Endothelial cell of umbilical vein (primary cell): ENCODE measurements at regions of chr13 and their contacts with region 1.

Region 1: DNA sequence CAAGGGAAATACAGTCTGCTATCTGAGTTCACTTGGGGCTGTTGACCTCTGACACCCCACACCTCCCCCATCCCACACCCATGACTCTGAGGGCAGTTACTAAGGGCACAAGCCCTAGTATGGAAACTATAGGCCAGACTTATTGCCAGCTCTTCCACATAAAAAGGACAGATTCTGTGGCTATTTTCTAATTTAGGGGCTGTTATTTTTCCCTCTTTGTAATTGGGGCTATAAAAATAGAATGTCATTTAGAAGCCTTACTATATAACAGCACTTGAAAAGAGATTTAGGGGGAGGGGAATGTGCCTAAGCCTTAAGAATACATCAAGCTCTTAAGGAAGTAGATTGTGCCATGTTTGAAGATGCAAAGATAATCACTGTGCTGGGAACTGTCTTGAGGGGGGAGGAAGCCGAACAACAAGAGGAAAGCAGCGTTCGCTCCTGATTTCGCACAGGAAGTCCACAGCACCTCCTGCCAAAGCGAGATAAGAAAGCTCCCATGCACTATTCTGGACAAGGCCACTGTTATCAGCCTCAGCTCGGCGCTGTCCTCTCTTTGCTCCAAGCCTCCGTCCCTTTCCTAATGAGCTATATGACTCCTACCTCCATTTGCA is 86.6 kb downstream of the FLT1 start:
- DNase-seq: peak; percentile 100
- H3K4me3 ChIP-seq: peak overlapping the region in 1 of 3 experiments; percentile 10
- H3K27ac ChIP-seq: peak overlapping the region; percentile 97
- H3K4me1 ChIP-seq: peaks cover 53% of the 10 kb centered on the region
- H3K27me3 ChIP-seq: no peaks in the 10 kb centered on the region
- CTCF ChIP-seq: no peak
- POLR2A ChIP-seq: peak; percentile 86

Region 2: GRCh38 chr13:28199089-28199488 is 209.3 kb before region 1 on chr13:
- CTCF ChIA-PET with region 1: no interaction called
- POLR2A ChIA-PET with region 1: no interaction called
- dilution Hi-C with region 1: no loop called
- intact Hi-C with region 1: no loop called
- DNase-seq: no peak
- H3K4me3 ChIP-seq: no peak overlapping the region
- H3K27ac ChIP-seq: no peak overlapping the region
- H3K4me1 ChIP-seq: no peaks in the 10 kb centered on the region
- H3K27me3 ChIP-seq: no peaks in the 10 kb centered on the region
- CTCF ChIP-seq: no peak
- POLR2A ChIP-seq: no peak

Region 3: DNA sequence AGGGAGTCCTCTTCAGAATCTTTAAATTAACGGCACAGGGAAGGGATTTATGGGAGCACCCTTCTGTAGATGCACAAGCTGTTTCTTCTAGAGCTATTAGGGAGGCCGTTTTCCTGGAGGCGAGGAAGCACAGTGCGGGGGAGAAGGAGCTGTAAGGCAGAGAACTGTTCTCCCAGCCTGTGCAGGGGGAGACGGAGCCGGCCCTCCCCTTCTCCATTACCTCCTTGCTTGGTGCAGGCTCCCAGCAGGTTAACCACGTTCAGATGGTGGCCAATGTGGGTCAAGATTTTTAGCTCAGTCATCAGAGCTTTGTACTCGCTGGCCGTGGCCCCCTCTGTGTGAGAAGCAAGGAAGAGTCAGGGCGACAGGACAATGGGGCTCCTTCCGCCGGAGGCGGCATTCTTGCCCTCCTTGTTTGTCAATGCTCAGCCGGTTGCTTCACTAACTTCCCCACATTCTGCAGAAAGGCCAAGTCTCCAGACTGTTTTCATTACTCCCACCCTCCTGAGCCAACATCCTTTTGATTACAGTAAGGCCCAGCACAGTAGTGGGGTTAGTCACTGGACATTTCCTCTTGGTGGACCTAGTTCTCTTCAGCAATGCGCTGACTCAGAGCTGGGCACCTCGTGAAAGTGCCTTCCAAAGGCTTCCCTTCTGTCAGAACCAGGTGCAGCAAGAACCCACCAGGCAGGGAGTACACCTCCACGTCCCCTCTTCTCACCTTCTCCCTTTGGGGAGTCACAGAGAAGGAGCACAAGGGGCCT is 78.8 kb before region 1 on chr13:
- CTCF ChIA-PET with region 1: interaction called, 10 read pairs
- POLR2A ChIA-PET with region 1: no interaction called
- dilution Hi-C with region 1: no loop called
- intact Hi-C with region 1: loop called (anchors 1 kb)
- DNase-seq: peak; percentile 99
- H3K4me3 ChIP-seq: no peak overlapping the region
- H3K27ac ChIP-seq: peak overlapping the region; percentile 98
- H3K4me1 ChIP-seq: peaks cover 57% of the 10 kb centered on the region
- H3K27me3 ChIP-seq: no peaks in the 10 kb centered on the region
- CTCF ChIP-seq: no peak
- POLR2A ChIP-seq: peak; percentile 77

Region 4: DNA sequence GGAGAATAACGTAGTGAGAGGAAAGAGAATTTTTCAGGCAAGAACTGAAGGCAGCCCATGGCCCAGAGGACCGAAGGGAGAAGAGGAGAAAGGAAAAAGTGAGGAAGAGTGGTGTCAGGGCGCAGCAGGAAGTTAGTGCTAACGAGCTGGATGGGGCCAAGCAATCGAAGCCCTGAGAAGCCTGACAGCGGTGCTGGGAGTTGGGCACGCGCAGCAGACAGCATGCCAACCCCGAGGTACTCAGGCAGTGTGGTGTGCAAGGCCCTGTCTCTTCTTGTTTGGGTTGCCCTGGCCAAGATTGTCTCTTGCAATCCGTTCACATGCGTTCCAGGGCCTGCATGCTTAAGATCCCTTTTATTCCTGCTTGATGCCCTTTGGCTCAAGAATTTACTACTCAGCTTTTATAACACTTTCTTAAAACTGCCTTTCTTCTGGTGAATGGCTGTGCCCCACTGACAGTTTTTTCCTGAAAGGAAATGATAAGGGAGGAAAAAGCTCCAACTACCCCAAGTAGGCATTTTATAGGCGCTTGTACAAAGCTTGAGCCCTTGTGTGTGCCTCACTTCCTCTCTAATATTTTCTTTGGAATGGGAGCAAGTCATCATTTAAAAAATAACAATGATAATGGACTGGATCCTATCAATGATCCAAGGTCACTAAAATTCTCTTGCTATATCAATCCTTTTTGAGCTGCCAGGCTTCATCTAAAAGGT is 28.8 kb before region 1 on chr13:
- CTCF ChIA-PET with region 1: interaction called, 10 read pairs
- POLR2A ChIA-PET with region 1: interaction called, 3 read pairs
- dilution Hi-C with region 1: no loop called
- intact Hi-C with region 1: loop called (anchors 1 kb)
- DNase-seq: peak; percentile 86
- H3K4me3 ChIP-seq: no peak overlapping the region
- H3K27ac ChIP-seq: peak overlapping the region; percentile 58
- H3K4me1 ChIP-seq: peaks cover 34% of the 10 kb centered on the region
- H3K27me3 ChIP-seq: no peaks in the 10 kb centered on the region
- CTCF ChIP-seq: no peak
- POLR2A ChIP-seq: peak; percentile 20

Region 5: GRCh38 chr13:28468023-28468915 is 59.9 kb after region 1 on chr13:
- CTCF ChIA-PET with region 1: interaction called, 3 read pairs
- POLR2A ChIA-PET with region 1: interaction called, 4 read pairs
- dilution Hi-C with region 1: no loop called
- intact Hi-C with region 1: loop called (anchors 2 kb)
- DNase-seq: no peak
- H3K4me3 ChIP-seq: no peak overlapping the region
- H3K27ac ChIP-seq: no peak overlapping the region
- H3K4me1 ChIP-seq: peaks cover 57% of the 10 kb centered on the region
- H3K27me3 ChIP-seq: no peaks in the 10 kb centered on the region
- CTCF ChIP-seq: no peak
- POLR2A ChIP-seq: no peak

Region 6: GRCh38 chr13:28574617-28575142 is 166.3 kb after region 1 on chr13:
- CTCF ChIA-PET with region 1: no interaction called
- POLR2A ChIA-PET with region 1: no interaction called
- dilution Hi-C with region 1: no loop called
- intact Hi-C with region 1: loop called (anchors 1 kb)
- DNase-seq: peak; percentile 98
- H3K4me3 ChIP-seq: no peak overlapping the region
- H3K27ac ChIP-seq: peak overlapping the region; percentile 99
- H3K4me1 ChIP-seq: peaks cover 10% of the 10 kb centered on the region
- H3K27me3 ChIP-seq: no peaks in the 10 kb centered on the region
- CTCF ChIP-seq: no peak
- POLR2A ChIP-seq: no peak

Region 7: GRCh38 chr13:28671126-28671792 is 262.9 kb after region 1 on chr13:
- CTCF ChIA-PET with region 1: no interaction called
- POLR2A ChIA-PET with region 1: no interaction called
- dilution Hi-C with region 1: no loop called
- intact Hi-C with region 1: no loop called
- DNase-seq: no peak
- H3K4me3 ChIP-seq: no peak overlapping the region
- H3K27ac ChIP-seq: no peak overlapping the region
- H3K4me1 ChIP-seq: no peaks in the 10 kb centered on the region
- H3K27me3 ChIP-seq: no peaks in the 10 kb centered on the region
- CTCF ChIP-seq: no peak
- POLR2A ChIP-seq: no peak